CD4-positive, alpha-beta memory T cell (primary cell): ENCODE measurements at regions of chr2 and their contacts with region 1.

Region 1: DNA sequence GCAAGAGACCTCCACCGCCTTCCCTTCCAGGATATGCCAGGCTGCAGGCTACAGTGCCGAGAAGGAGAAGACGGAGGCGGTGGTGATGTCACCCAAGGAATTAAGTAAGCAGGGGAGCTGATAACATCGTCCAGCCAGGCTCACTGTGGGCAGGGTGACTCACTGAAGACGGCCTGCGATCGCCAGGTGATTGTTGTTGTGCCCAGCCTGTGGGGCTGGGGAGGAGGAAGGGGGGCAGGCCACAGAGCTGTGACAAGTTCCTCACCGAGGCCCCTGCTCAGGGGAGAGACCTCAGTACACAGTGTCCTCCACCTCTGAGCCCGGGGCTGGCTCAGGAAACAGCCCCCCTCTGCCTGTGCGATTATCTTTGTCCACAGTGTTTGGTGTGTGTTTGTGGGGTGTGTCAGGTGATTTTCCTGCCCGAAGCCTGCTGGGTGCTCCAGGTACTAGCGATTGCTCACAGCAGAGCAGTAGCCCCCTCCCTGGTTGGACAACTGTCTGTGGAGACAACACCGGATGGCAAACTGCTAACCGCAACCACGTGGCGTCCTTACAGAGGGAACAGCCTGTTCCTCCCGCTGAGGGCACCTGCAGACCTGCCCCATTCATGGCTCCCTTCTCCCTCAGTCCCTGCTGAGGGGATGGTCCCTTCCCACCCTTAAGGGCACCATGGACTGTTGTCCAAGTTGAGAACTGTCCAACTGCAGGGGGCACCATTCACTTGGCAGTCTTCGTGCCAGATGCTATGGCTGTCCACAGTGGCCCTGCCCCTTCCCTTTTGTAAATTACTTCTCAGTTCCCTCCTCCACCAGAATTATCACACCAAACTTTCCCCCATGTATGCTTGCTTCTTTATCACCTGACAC is 95.1 kb downstream of the ZFP36L2 start:
- DNase-seq: peak; percentile 90 to 96 (median 91)
- H3K4me3 ChIP-seq: peak overlapping the region; percentile 26 to 31
- H3K4me3 Mint-ChIP-seq: peak overlapping the region; percentile 17 to 86 (median 64)
- H3K27ac ChIP-seq: peak overlapping the region; percentile 83
- H3K27ac Mint-ChIP-seq: peak overlapping the region; percentile 97 to 100 (median 100)
- H3K4me1 ChIP-seq: peaks cover 91% of the 10 kb centered on the region
- H3K4me1 Mint-ChIP-seq: peaks cover 67 to 92% (median 81%) of the 10 kb centered on the region in 4 donors
- H3K27me3 ChIP-seq: no peaks in the 10 kb centered on the region
- H3K27me3 Mint-ChIP-seq: no peaks in the 10 kb centered on the region

Region 2: DNA sequence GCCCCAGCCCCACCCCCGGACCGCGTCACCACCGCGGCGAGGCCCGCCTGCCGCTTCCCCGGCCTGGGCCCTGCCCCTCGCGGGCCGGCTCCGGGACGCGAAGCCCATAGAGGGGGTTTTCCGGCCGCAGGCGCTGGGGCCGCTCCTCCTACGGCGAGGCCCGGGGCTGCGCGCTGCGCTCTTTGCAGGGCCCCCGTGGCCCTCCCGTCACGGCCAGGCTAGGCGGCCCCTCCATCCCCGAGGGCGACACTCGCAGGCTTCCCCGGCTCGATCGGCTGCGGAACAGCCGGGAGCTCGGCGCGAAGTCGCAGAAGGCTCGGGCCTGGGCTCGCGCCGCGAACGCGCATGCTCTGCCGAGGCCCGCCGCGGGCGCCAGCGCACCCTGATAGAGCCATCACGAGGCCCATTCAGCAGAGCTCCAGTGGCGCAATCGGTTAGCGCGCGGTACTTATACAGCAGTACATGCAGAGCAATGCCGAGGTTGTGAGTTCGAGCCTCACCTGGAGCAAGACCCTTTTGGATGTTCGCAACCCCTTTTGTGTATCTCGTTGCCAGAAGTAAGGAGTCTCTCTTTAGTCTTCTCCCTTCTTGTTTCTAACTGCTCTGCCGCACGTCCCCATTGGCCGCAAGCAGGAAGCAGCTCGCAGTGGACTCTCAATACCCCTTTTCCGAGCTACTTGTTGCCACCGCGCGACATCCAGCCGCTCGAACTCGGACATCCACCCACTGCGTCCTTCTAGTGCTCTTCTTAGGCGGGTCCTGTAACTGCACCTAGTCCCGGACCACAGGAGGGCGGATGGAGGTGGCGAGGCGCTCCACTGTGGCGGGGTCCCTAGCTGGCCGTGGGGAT is 320.9 kb before region 1 on chr2:
- CTCF ChIA-PET with region 1: no interaction called
- POLR2A ChIA-PET with region 1: interaction called, 12 read pairs
- intact Hi-C with region 1: no loop called
- DNase-seq: peak; percentile 96 to 97 (median 97)
- H3K4me3 ChIP-seq: peak overlapping the region; percentile 90 to 98
- H3K4me3 Mint-ChIP-seq: peak overlapping the region; percentile 93 to 99 (median 97)
- H3K27ac ChIP-seq: peak overlapping the region; percentile 81
- H3K27ac Mint-ChIP-seq: peak overlapping the region; percentile 95 to 99 (median 99)
- H3K4me1 ChIP-seq: peaks cover 9% of the 10 kb centered on the region
- H3K4me1 Mint-ChIP-seq: peaks cover 9 to 33% (median 17%) of the 10 kb centered on the region in 4 donors
- H3K27me3 ChIP-seq: no peaks in the 10 kb centered on the region
- H3K27me3 Mint-ChIP-seq: peaks cover 0 to 2% of the 10 kb centered on the region in 2 donors

Region 3: GRCh38 chr2:43158259-43158880 is 27.1 kb after region 1 on chr2:
- CTCF ChIA-PET with region 1: interaction called, 15 read pairs
- POLR2A ChIA-PET with region 1: interaction called, 1,220 read pairs
- intact Hi-C with region 1: loop called (anchors 1 kb)
- DNase-seq: peak in 1 of 5 donors; percentile 55
- H3K4me3 ChIP-seq: peak overlapping the region; percentile 30 to 40
- H3K4me3 Mint-ChIP-seq: peak overlapping the region; percentile 75 to 87 (median 80)
- H3K27ac ChIP-seq: peak overlapping the region; percentile 84
- H3K27ac Mint-ChIP-seq: peak overlapping the region; percentile 97 to 99 (median 99)
- H3K4me1 ChIP-seq: peaks cover 76% of the 10 kb centered on the region
- H3K4me1 Mint-ChIP-seq: peaks cover 41 to 94% (median 66%) of the 10 kb centered on the region in 4 donors
- H3K27me3 ChIP-seq: no peaks in the 10 kb centered on the region
- H3K27me3 Mint-ChIP-seq: no peaks in the 10 kb centered on the region

Region 4: GRCh38 chr2:43194121-43194869 is 63.0 kb after region 1 on chr2:
- CTCF ChIA-PET with region 1: interaction called, 28 read pairs
- POLR2A ChIA-PET with region 1: interaction called, 6,960 read pairs
- intact Hi-C with region 1: loop called (anchors 1 kb)
- DNase-seq: peak in 1 of 5 donors; percentile 33
- H3K4me3 ChIP-seq: peak overlapping the region; percentile 14 to 47
- H3K4me3 Mint-ChIP-seq: peak overlapping the region; percentile 85 to 98 (median 92)
- H3K27ac ChIP-seq: peak overlapping the region; percentile 95
- H3K27ac Mint-ChIP-seq: peak overlapping the region; percentile 95 to 100 (median 99)
- H3K4me1 ChIP-seq: peaks cover 73% of the 10 kb centered on the region
- H3K4me1 Mint-ChIP-seq: peaks cover 35 to 74% (median 53%) of the 10 kb centered on the region in 4 donors
- H3K27me3 ChIP-seq: no peaks in the 10 kb centered on the region
- H3K27me3 Mint-ChIP-seq: no peaks in the 10 kb centered on the region

Region 5: GRCh38 chr2:43312755-43313641 is 181.7 kb after region 1 on chr2:
- CTCF ChIA-PET with region 1: no interaction called
- POLR2A ChIA-PET with region 1: no interaction called
- intact Hi-C with region 1: no loop called
- DNase-seq: no peak
- H3K4me3 ChIP-seq: no peak overlapping the region
- H3K4me3 Mint-ChIP-seq: no peak overlapping the region
- H3K27ac ChIP-seq: no peak overlapping the region
- H3K27ac Mint-ChIP-seq: no peak overlapping the region
- H3K4me1 ChIP-seq: peaks cover 2% of the 10 kb centered on the region
- H3K4me1 Mint-ChIP-seq: peaks cover 4 to 16% (median 7%) of the 10 kb centered on the region in 4 donors
- H3K27me3 ChIP-seq: no peaks in the 10 kb centered on the region
- H3K27me3 Mint-ChIP-seq: no peaks in the 10 kb centered on the region

Region 6: GRCh38 chr2:43478411-43479086 is 347.3 kb after region 1 on chr2:
- CTCF ChIA-PET with region 1: interaction called, 120 read pairs
- POLR2A ChIA-PET with region 1: interaction called, 27 read pairs
- intact Hi-C with region 1: no loop called
- DNase-seq: no peak
- H3K4me3 ChIP-seq: no peak overlapping the region
- H3K4me3 Mint-ChIP-seq: no peak overlapping the region
- H3K27ac ChIP-seq: no peak overlapping the region
- H3K27ac Mint-ChIP-seq: peak overlapping the region in 1 of 7 donors; percentile 12
- H3K4me1 ChIP-seq: no peaks in the 10 kb centered on the region
- H3K4me1 Mint-ChIP-seq: peaks cover 0 to 7% (median 0%) of the 10 kb centered on the region in 4 donors
- H3K27me3 ChIP-seq: no peaks in the 10 kb centered on the region
- H3K27me3 Mint-ChIP-seq: no peaks in the 10 kb centered on the region

Region 7: GRCh38 chr2:43576981-43577892 is 446.0 kb after region 1 on chr2:
- CTCF ChIA-PET with region 1: interaction called, 6 read pairs
- POLR2A ChIA-PET with region 1: no interaction called
- intact Hi-C with region 1: loop called (anchors 1 kb)
- DNase-seq: peak in 4 of 5 donors; percentile 51 to 54 (median 54)
- H3K4me3 ChIP-seq: no peak overlapping the region
- H3K4me3 Mint-ChIP-seq: no peak overlapping the region
- H3K27ac ChIP-seq: no peak overlapping the region
- H3K27ac Mint-ChIP-seq: peak overlapping the region in 1 of 7 donors; percentile 12
- H3K4me1 ChIP-seq: no peaks in the 10 kb centered on the region
- H3K4me1 Mint-ChIP-seq: peaks cover 2 to 15% (median 10%) of the 10 kb centered on the region in 4 donors
- H3K27me3 ChIP-seq: no peaks in the 10 kb centered on the region
- H3K27me3 Mint-ChIP-seq: no peaks in the 10 kb centered on the region